Left cardiac atrium (tissue), 4 donors: ENCODE measurements at regions of chr18 and their contacts with region 1.

Region 1: DNA sequence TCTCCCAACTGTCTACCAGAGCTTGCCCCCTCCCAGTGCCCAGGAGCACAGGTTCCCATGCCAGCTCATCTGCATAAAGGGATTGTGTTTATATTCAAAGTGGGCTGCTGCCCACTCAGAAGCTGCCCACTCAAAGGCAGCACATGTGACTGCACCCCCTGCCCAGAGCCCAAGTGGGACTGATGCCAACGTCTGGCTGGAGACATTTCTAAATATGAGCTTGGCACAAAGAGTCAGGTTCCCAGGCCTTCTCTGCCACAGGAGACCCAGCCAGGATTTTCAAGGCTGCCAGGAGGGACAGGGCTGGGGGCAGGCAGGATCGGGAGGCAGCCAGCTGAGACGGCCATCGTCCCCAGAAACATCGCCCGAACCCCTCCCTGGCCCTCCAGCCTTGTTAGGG is 67.1 kb downstream of the ZBTB7C start:
- DNase-seq: no peak
- ATAC-seq: peak; percentile 28 to 47

Region 2: DNA sequence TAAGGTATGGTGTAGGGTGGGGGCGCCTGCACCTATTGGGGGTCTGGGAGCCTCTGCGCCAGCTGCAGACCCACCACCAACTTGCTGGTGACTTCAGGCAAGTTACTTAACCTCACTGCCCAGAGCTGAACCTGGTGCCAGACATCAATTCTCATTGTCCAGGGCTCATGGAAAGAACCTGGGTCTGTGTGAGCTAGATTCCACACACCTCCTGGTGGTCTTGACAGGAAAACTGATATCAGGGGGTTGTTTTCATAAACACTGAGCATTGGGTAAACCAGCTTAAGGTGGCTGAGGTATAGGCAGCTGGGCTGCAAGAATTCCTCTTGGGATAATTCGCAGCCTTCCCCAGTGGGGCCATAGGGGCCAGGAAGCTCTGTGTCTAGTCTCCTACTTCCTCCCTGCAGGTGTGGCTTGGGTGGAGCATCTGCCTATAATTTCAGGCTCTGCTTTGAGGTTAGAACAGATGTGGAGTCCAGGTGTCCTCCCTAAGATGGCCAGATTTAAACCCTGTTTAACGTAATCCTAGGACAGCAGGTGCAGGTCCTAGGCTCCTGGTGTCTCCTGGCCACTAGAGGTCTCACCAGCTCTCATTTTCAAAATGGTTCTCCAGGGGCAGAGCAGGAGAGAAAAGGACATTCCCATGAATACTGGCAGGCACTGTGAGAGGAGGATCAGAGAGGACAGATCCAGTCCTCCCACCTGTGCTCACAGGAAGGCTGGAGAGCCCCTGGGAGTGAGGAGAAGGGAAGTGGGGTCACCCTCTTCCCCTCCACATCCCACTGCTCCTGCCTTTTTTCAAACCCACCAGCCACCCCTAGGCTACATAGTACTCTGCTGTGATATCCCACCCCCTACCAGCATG is 311.3 kb before region 1 on chr18:
- intact Hi-C with region 1: loop called (anchors 5 to 10 kb)
- DNase-seq: no peak
- ATAC-seq: peak; percentile 63 to 68

Region 3: GRCh38 chr18:48409591-48410094 is 67.5 kb after region 1 on chr18:
- intact Hi-C with region 1: loop called in 1 of 2 experiments (anchors 5 kb)
- DNase-seq: peak; percentile 55
- ATAC-seq: peak; percentile 49 to 54

Region 4: DNA sequence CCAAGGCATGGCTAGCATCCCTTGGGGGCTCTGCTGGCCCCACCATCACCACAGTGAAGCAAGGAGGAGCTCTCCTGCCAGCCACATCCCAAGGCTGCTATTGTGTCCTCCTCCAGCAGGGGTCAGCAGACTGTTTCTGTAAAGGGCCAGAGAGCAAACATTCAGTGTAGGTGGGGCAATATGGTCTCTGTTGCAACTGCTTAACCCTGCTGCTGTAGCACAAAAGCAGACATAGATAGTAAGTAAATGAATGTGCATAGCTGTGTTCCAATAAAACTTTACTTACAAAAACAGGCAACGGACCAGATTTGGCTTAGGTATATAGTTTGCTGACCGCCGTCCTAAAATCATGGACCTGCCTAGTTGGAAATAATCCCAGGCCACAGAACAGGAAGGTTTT is 103.4 kb after region 1 on chr18:
- intact Hi-C with region 1: loop called in 1 of 2 experiments (anchors 5 kb)
- DNase-seq: peak; percentile 74
- ATAC-seq: peak; percentile 36 to 77